PC-9 (cell line): ENCODE measurements at regions of chr5 and their contacts with region 1.

Region 1: DNA sequence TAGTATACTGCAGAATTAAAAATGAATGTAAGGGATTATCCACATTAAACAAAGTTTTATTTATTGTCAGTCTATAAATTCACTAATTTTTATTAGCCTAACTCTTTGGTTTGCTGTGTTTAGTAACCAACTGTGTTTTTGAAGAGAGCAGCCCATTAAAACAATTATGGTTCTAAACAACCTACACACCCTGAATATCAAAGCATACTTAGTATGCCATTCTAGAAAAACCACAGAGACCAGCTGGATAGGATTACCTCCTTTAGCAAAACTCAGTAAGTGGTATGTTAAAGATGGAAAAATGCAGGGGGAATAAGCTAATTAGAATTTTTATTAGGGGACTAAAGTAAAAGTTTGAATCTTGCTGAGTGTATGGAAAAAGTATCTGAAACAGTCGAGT is 1981.7 kb upstream of the NUDT12 start:
- DNase-seq: no peak
- H3K4me3 ChIP-seq: no peak overlapping the region
- H3K27ac ChIP-seq: no peak overlapping the region
- H3K4me1 ChIP-seq: no peaks in the 10 kb centered on the region
- H3K27me3 ChIP-seq: no peaks in the 10 kb centered on the region
- CTCF ChIP-seq: no peak

Region 2: DNA sequence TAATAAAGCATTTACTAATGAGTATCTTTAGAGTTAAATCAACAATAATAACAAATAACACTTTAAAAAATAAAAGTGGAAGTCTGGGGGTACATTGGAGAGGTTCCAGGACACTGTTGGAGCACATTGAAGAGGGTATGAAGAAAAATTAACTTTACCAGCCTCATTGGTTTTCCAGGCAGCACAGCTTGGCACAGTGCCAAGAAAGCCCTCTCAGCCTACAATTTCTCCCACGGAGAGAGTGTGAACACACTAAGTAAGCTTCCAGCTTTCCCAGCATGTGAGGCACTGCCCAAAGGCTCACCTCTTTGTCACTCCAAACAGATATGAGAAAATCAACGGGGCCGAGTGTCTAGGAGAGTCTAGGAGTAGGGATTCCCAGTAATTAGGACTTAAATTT is 68.9 kb before region 1 on chr5:
- CTCF ChIA-PET with region 1: no interaction called
- POLR2A ChIA-PET with region 1: interaction called, 12 read pairs
- intact Hi-C with region 1: no loop called
- DNase-seq: no peak
- H3K4me3 ChIP-seq: no peak overlapping the region
- H3K27ac ChIP-seq: no peak overlapping the region
- H3K4me1 ChIP-seq: no peaks in the 10 kb centered on the region
- H3K27me3 ChIP-seq: no peaks in the 10 kb centered on the region
- CTCF ChIP-seq: no peak

Region 3: DNA sequence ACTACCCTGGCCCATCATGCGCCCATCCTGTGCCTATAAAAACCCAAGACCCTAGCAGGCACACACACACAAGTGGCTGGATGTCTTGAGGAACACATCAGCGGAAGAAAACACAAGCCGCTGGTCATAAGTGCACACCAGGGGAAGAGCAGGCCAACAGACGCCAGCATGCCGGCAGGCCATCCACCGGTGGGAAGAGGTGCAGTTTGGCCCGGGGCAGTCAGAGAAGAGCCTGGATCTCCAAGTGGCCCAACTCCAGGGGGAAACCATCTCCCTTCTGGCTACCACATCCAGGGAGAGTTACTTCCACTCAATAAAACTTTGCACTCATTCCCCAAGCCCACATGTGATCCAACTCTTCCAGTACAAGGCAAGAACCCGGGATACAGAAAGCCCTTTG is 19.5 kb after region 1 on chr5:
- CTCF ChIA-PET with region 1: no interaction called
- POLR2A ChIA-PET with region 1: no interaction called
- intact Hi-C with region 1: no loop called
- DNase-seq: no peak
- H3K4me3 ChIP-seq: no peak overlapping the region
- H3K27ac ChIP-seq: no peak overlapping the region
- H3K4me1 ChIP-seq: no peaks in the 10 kb centered on the region
- H3K27me3 ChIP-seq: no peaks in the 10 kb centered on the region
- CTCF ChIP-seq: no peak